AG04450 (cell line): ENCODE measurements at regions of chr7 and their contacts with region 1.

Region 1: GRCh38 chr7:131654668-131655326 is 98.4 kb upstream of the PODXL start:
- DNase-seq: peak; percentile 45
- H3K4me3 ChIP-seq: no peak overlapping the region
- H3K27ac ChIP-seq: no peak overlapping the region
- H3K27me3 ChIP-seq: peaks cover 12% of the 10 kb centered on the region
- CTCF ChIP-seq: peak; percentile 92

Region 2: DNA sequence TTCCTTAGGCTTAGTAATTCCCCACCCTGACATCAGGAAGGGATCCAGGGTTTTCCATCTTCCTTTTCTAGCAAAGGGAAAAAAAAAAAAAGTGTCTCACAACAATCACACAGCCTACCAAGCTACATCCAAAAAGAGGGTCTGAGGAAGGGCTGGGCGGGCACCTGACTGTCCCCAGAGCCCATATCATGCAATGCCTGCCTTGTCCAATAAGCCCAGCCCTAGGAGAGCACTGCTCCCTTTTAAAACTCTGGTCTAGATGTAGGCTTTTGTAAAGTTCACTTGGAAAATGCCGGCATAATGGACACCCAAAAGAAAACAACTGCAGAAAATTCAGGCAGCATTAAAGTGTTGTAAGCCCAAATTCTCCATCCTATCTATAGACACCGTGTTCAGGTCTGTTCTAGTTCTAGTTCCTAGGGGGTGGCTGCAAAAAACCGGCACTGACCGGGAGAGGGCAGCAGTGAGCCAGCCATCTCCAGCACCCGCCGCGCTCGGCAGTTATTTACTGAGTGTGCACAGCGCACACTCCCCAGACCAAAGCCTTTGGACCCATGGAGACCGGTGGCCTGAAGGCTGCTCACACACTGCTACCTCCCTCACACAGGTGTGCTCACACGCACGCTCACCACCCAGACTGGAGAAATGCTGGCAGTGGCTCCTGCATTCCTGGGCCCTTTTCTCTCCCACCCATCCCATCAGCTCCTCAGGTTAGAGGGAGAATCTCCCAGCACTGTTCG is 147.0 kb before region 1 on chr7:
- CTCF ChIA-PET with region 1: interaction called, 85 read pairs
- POLR2A ChIA-PET with region 1: no interaction called
- DNase-seq: peak; percentile 34
- H3K4me3 ChIP-seq: no peak overlapping the region
- H3K27ac ChIP-seq: peak overlapping the region; percentile 21
- H3K27me3 ChIP-seq: no peaks in the 10 kb centered on the region
- CTCF ChIP-seq: peak; percentile 96

Region 3: GRCh38 chr7:131513245-131514061 is 141.3 kb before region 1 on chr7:
- CTCF ChIA-PET with region 1: interaction called, 85 read pairs
- POLR2A ChIA-PET with region 1: no interaction called
- DNase-seq: peak; percentile 68
- H3K4me3 ChIP-seq: no peak overlapping the region
- H3K27ac ChIP-seq: no peak overlapping the region
- H3K27me3 ChIP-seq: no peaks in the 10 kb centered on the region
- CTCF ChIP-seq: peak; percentile 98

Region 4: DNA sequence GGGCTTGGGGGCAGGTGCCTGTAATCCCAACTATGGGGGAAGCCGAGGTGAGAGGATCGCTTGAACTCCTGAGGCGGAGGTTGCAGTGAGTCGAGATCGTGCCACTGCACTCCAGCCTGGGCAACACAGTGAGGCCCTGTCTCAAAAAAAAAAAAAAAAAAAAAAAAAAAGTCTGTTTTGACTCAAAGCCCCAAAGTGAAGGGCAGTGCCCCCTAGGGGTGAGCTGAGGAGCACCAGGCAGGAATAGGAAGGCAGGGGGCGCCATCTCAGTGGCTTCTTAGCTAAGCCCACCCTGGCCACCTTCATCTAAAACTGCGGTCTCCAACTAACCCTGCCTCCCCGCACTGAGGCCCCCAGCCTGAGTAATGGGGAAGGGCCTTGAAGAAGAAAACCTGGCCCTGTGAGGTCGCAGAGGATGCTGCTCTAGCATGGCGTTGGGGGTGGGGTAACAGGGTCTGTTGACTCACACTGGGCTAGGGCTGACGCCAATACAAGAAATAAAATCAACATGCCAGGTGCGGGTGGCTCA is 108.2 kb before region 1 on chr7:
- CTCF ChIA-PET with region 1: interaction called, 20 read pairs
- POLR2A ChIA-PET with region 1: interaction called, 3 read pairs
- DNase-seq: no peak
- H3K4me3 ChIP-seq: no peak overlapping the region
- H3K27ac ChIP-seq: no peak overlapping the region
- H3K27me3 ChIP-seq: peaks cover 9% of the 10 kb centered on the region
- CTCF ChIP-seq: peak; percentile 63

Region 5: GRCh38 chr7:132343199-132343598 is 688.4 kb after region 1 on chr7:
- CTCF ChIA-PET with region 1: no interaction called
- POLR2A ChIA-PET with region 1: no interaction called
- DNase-seq: no peak
- H3K4me3 ChIP-seq: no peak overlapping the region
- H3K27ac ChIP-seq: no peak overlapping the region
- H3K27me3 ChIP-seq: no peaks in the 10 kb centered on the region
- CTCF ChIP-seq: no peak